H1 (cell line): ENCODE measurements at regions of chr14 and their contacts with region 1.

Region 1: GRCh38 chr14:61750708-61751474 is 11.3 kb upstream of the SNAPC1 start:
- DNase-seq: peak; percentile 53 to 87
- H3K4me3 ChIP-seq: peak overlapping the region; percentile 41 to 66 (median 45)
- H3K27ac ChIP-seq: peak overlapping the region; percentile 32; the same call in 1 of the 2 replicates
- H3K4me1 ChIP-seq: peaks cover 0 to 5% (median 4%) of the 10 kb centered on the region in 4 experiments; a peak in 2 of 7 replicates
- H3K27me3 ChIP-seq: no peaks in the 10 kb centered on the region
- CTCF ChIP-seq: no peak
- EP300 ChIP-seq: peak in 1 of 2 experiments; percentile 58; a peak in 1 of 3 replicates
- POLR2A ChIP-seq: peak in 1 of 2 experiments; percentile 70; a peak in 2 of 3 replicates
- RAD21 ChIP-seq: no peak

Region 2: GRCh38 chr14:61737915-61738314 is 13.0 kb before region 1 on chr14:
- CTCF ChIA-PET with region 1: interaction called, 6 read pairs
- POLR2A ChIA-PET with region 1: interaction called, 12 read pairs
- DNase-seq: no peak
- H3K4me3 ChIP-seq: no peak overlapping the region
- H3K27ac ChIP-seq: no peak overlapping the region
- H3K4me1 ChIP-seq: no peaks in the 10 kb centered on the region
- H3K27me3 ChIP-seq: peaks cover 0 to 2% (median 0%) of the 10 kb centered on the region in 4 experiments; a peak in 1 of 7 replicates
- CTCF ChIP-seq: no peak
- EP300 ChIP-seq: no peak
- POLR2A ChIP-seq: no peak
- RAD21 ChIP-seq: no peak

Region 3: DNA sequence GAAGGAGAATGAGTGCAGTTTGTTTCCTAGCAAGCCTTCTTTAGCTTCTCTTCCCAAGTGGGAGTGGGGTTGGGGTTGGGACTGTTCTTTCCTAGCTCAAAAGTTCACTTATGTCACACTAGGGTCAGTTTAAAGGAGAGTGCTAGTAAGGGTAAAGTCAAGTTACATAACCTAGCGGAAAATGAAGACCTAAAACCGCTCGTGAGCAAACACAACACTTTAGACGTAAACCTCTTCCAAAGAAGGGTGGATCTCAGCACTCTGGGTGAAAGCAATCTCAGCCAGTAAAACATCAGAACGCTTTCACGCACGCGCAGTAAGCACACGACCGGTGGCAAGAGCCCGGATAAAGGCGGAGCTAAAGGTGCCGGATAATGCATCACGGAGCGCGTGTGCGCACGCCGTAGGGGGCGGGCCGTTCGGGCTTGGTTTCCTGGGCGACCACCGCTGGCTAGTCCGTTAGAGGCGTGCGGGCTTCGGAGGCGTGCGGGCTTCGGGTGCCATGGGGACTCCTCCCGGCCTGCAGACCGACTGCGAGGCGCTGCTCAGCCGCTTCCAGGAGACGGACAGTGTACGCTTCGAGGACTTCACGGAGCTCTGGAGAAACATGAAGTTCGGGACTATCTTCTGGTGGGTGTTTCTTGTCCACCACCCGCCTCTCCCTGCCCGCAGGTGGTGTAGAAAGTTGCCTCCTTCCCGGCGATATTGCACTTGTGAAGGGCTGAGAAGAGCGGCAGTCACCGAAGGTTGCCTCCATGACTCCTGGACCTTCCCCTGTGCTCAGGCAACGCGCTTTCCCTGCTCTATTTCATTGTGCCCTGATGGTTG is 11.3 kb after region 1 on chr14 and contains the start of gene SNAPC1:
- CTCF ChIA-PET with region 1: interaction called, 25 read pairs
- POLR2A ChIA-PET with region 1: interaction called, 67 read pairs
- DNase-seq: peak; percentile 95 to 97
- H3K4me3 ChIP-seq: peak within 1 kb of the TSS; percentile 94 to 97 (median 96)
- H3K27ac ChIP-seq: peak within 1 kb of the TSS; percentile 83
- H3K4me1 ChIP-seq: peaks cover 0 to 9% (median 4%) of the 10 kb centered on the region in 4 experiments; a peak in 4 of 7 replicates
- H3K27me3 ChIP-seq: no peaks in the 10 kb centered on the region
- CTCF ChIP-seq: no peak
- EP300 ChIP-seq: no peak
- POLR2A ChIP-seq: peak; percentile 78 to 95
- RAD21 ChIP-seq: no peak
- total RNA-seq, gene SNAPC1: 9.6 and 11.1 TPM in 2 replicates